B cell (primary cell): ENCODE measurements at regions of chr7 and their contacts with region 1.

Region 1: DNA sequence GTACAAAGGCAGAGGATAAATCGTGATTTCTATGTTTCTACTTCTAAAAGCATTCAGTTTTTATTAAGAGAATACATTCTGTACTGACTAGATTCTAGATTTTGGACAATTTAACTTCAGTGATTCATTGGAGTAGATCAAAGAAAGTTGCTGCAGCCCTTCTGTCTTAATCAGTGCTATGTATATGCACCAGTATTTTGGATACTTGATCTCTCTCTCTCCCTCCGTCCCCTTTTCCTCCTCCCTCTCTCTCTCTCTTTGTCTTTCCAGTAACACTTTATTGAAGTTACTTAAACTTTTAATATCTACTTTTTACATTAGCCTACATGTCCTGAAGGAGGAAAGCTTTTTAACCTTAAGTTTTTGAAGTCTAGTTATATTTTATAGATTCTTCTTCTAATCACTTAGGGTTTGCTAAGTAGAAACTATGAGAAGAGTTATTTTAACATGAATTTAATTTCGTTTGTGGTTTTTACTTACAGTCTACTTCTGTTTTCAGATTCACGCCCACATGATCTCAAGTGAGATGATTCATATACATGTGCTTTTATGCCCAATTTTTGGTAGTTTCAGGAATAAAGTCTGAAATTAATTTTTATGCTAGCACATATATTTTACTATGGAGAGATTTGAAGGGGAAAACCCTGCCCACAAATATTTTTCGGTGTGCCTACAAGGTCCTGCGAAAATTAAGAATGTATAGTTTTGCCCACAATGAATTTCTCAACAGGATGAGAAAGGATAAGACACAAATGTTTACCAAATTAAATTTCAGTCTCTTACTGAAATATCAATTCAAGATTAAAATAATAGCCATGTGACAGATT is 9.1 kb downstream of the MDFIC start:
- DNase-seq: peak; percentile 60
- ATAC-seq: peak; percentile 52
- H3K4me3 ChIP-seq: peak overlapping the region in 4 of 5 experiments; percentile 10 to 57 (median 37)
- H3K4me3 Mint-ChIP-seq: no peak overlapping the region
- H3K27ac ChIP-seq: peak overlapping the region; percentile 83 to 95
- H3K27ac Mint-ChIP-seq: peak overlapping the region; percentile 83
- H3K4me1 ChIP-seq: peaks cover 62 to 77% of the 10 kb centered on the region in 2 donors
- H3K4me1 Mint-ChIP-seq: peaks cover 32% of the 10 kb centered on the region
- H3K27me3 ChIP-seq: no peaks in the 10 kb centered on the region
- H3K27me3 Mint-ChIP-seq: no peaks in the 10 kb centered on the region
- CTCF ChIP-seq: no peak

Region 2: DNA sequence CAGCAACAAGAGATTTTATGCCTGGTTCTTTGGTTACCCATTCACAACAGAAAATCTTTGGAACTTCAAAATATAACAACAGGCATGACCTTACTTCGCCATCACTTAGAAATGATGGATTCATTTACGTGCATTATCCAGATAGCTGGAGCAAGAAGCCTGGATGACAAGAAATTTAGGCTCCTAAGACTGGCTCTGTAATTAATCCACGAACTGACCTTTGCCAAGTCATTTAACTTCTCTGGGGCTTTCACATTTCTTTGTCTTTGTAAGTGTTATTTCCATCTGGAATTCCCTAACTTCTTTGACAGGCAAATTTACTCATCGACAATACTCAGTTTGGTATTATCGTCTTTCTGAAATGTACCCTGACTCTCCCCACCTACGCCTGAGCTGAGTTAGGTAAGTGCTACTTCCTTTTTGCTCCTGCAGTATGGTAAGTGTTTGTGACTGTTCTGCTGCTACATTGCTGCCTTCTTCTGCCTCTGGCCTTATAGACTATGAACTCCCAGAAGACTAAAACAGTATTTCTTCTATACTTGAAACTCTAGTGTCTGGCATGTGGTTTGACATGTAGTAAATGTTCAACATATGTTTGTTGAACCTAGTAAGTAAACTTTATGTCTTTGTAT is 14.7 kb before region 1 on chr7:
- CTCF ChIA-PET with region 1: interaction called, 4 read pairs
- POLR2A ChIA-PET with region 1: no interaction called
- intact Hi-C with region 1: loop called (anchors 2 kb)
- DNase-seq: peak; percentile 61
- ATAC-seq: peak; percentile 87
- H3K4me3 ChIP-seq: peak overlapping the region in 1 of 5 experiments; percentile 29
- H3K4me3 Mint-ChIP-seq: peak overlapping the region; percentile 72
- H3K27ac ChIP-seq: peak overlapping the region; percentile 47 to 77
- H3K27ac Mint-ChIP-seq: peak overlapping the region; percentile 88
- H3K4me1 ChIP-seq: peaks cover 20 to 33% of the 10 kb centered on the region in 2 donors
- H3K4me1 Mint-ChIP-seq: peaks cover 47% of the 10 kb centered on the region
- H3K27me3 ChIP-seq: no peaks in the 10 kb centered on the region
- H3K27me3 Mint-ChIP-seq: no peaks in the 10 kb centered on the region
- CTCF ChIP-seq: no peak

Region 3: DNA sequence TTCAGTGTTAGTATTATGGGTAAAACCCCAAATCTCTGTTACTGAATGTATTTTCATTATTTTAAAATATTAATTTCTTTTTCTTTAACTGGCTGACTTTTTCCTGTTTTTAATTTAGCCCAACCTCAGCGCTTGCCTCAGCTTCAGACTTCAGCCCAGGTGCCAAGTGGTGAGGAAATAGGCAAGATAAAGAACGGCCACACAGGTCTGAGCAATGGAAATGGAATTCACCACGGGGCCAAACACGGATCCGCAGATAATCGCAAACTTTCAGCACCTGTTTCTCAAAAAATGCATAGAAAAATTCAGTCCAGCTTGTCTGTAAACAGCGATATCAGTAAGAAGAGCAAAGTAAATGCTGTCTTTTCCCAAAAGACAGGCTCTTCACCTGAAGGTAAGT is 48.3 kb after region 1 on chr7:
- CTCF ChIA-PET with region 1: no interaction called
- POLR2A ChIA-PET with region 1: no interaction called
- intact Hi-C with region 1: loop called (anchors 5 kb)
- DNase-seq: no peak
- ATAC-seq: no peak
- H3K4me3 ChIP-seq: no peak overlapping the region
- H3K4me3 Mint-ChIP-seq: peak overlapping the region; percentile 37
- H3K27ac ChIP-seq: no peak overlapping the region
- H3K27ac Mint-ChIP-seq: no peak overlapping the region
- H3K4me1 ChIP-seq: peaks cover 4 to 18% of the 10 kb centered on the region in 2 donors
- H3K4me1 Mint-ChIP-seq: peaks cover 51% of the 10 kb centered on the region
- H3K27me3 ChIP-seq: no peaks in the 10 kb centered on the region
- H3K27me3 Mint-ChIP-seq: no peaks in the 10 kb centered on the region
- CTCF ChIP-seq: no peak